Gastrocnemius medialis (tissue), 4 donors: ENCODE measurements at regions of chr1 and their contacts with region 1.

Region 1: GRCh38 chr1:182348961-182349747 is 42.4 kb downstream of the GLUL start:
- DNase-seq: peak; percentile 85 to 92
- ATAC-seq: peak; percentile 73 to 75
- H3K4me3 ChIP-seq: no peak overlapping the region
- H3K27ac ChIP-seq: peak overlapping the region; percentile 89 to 100 (median 94)
- H3K4me1 ChIP-seq: peaks cover 46 to 50% of the 10 kb centered on the region in 2 donors
- H3K27me3 ChIP-seq: no peaks in the 10 kb centered on the region
- CTCF ChIP-seq: peak in 1 of 5 experiments; percentile 17
- POLR2A ChIP-seq: peak; percentile 67 to 79

Region 2: DNA sequence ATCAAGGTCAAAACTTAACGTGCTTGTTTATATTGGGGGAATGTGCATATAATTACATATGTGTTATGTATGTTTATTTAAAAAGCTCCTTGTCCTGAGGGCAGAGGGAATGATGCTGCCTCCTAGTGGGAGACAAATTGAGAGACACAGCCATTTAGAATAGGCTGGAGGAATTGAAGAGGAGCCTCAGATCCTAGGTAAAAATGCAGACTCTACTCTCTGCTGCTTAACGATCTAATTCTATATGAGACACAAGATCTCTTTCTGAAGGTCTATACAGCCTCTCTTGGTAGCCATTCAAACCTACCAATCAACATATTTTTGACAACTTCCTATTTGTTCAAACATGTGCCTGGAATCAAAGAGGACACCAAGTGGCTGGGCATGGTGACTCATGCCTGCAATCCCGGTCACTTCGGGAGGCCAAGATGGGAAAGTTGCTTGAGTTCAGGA is 151.1 kb before region 1 on chr1:
- in situ Hi-C with region 1: no loop called
- intact Hi-C with region 1: loop called (anchors 2 kb)
- DNase-seq: peak in 1 of 2 donors; percentile 36
- ATAC-seq: no peak
- H3K4me3 ChIP-seq: no peak overlapping the region
- H3K27ac ChIP-seq: peak overlapping the region; percentile 64 to 83 (median 74)
- H3K4me1 ChIP-seq: peaks cover 21 to 35% of the 10 kb centered on the region in 2 donors
- H3K27me3 ChIP-seq: no peaks in the 10 kb centered on the region
- CTCF ChIP-seq: peak in 3 of 5 experiments; percentile 19 to 36 (median 27)
- POLR2A ChIP-seq: no peak

Region 3: GRCh38 chr1:182206626-182207239 is 142.4 kb before region 1 on chr1:
- in situ Hi-C with region 1: no loop called
- intact Hi-C with region 1: loop called (anchors 1 kb)
- DNase-seq: peak; percentile 80 to 92
- ATAC-seq: peak; percentile 76 to 83
- H3K4me3 ChIP-seq: no peak overlapping the region
- H3K27ac ChIP-seq: peak overlapping the region; percentile 74 to 93 (median 87)
- H3K4me1 ChIP-seq: peaks cover 25 to 29% of the 10 kb centered on the region in 2 donors
- H3K27me3 ChIP-seq: no peaks in the 10 kb centered on the region
- CTCF ChIP-seq: no peak
- POLR2A ChIP-seq: peak; percentile 36 to 68

Region 4: DNA sequence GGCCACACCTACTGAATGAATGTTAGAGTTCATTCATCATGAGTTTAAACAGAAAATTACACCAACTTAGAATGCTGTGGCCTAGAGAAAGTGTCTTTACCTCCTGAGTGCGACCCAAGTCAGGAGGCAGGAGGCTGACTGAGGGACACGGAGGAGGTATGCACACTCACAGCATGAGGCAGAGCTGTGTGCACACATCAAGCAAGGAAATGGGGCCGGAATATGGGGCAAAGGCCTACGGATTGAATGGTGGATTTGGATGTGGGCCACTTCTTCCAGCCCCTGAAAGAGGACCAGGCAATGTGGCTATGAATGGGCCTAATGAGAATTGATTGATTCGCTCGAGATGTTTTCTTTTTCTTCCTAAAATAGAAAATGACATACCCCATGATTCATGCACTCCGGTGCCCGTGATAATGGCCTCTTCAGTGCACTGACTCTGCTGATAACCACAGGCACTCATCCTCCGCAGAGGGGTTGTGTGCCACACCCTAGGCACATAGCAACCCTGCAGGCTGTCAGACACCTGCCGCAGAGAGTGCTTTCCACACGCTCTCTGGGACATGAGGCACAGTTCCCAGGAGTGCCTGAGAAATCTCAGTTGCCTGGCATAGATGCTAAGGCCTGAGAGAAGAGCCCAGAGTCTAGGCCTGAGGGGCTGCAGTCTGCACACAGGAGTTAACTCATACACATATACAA is 113.1 kb before region 1 on chr1:
- in situ Hi-C with region 1: no loop called
- intact Hi-C with region 1: loop called (anchors 2 kb)
- DNase-seq: peak; percentile 68 to 71
- ATAC-seq: peak; percentile 87
- H3K4me3 ChIP-seq: no peak overlapping the region
- H3K27ac ChIP-seq: peak overlapping the region; percentile 69 to 75 (median 74)
- H3K4me1 ChIP-seq: peaks cover 0 to 12% of the 10 kb centered on the region in 2 donors
- H3K27me3 ChIP-seq: no peaks in the 10 kb centered on the region
- CTCF ChIP-seq: no peak
- POLR2A ChIP-seq: peak; percentile 21 to 35

Region 5: DNA sequence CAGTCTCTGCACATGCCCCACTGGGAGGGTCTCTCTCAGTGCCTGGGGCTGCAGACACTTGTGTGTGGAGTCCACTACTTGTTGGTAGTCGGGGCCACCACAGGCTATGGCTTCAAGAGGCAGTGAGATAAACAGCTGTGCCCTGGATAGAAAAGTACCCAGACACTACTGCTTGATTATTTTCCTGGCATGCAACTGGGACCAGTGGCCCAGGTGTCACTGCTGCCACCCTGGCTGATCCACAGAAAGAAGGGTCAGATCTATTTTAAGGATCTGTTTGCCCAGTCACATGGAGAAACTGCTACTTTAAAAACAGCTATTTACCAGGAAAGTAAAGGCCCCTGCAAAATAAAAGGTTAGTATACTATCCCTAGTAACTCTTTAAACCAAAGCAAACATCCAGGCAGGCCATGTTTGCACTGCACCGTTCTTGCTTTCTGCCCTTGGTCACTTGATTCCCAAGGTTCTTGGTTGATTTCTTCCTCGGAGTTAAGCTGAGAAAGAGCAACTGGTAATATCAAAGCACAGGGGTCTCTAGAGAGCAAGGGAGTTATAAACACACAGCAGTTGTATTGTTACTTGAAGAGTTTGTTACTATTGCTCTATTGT is 57.5 kb before region 1 on chr1:
- in situ Hi-C with region 1: no loop called
- intact Hi-C with region 1: loop called (anchors 1 kb)
- DNase-seq: peak; percentile 72 to 78
- ATAC-seq: peak; percentile 37 to 54
- H3K4me3 ChIP-seq: peak overlapping the region in 1 of 4 donors; percentile 2
- H3K27ac ChIP-seq: peak overlapping the region; percentile 85 to 94 (median 90)
- H3K4me1 ChIP-seq: peaks cover 45 to 53% of the 10 kb centered on the region in 2 donors
- H3K27me3 ChIP-seq: no peaks in the 10 kb centered on the region
- CTCF ChIP-seq: no peak
- POLR2A ChIP-seq: peak; percentile 30 to 49